Spleen (tissue), 13 donors: ENCODE measurements at regions of chr7 and their contacts with region 1.

Region 1: DNA sequence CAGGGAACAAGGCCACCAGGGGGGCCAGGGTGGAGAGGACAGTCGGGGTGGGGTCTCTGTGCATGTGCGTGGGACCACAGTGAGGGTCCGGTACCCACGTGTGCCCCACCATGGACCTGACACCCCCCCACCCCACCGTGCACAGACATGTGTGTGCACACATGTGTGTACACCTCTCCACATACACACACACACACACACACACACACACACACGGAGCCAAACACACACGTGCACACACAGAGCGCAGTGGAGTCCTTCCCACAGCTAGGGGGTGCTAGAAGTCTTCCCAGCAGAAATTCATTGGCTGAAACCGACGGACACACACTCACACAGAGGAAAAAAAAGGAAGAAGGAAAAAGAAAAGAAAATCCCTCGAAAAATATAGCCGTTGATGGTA is 42.8 kb upstream of the GNA12 start:
- DNase-seq: no peak
- H3K4me3 ChIP-seq: no peak overlapping the region
- H3K27ac ChIP-seq: no peak overlapping the region
- H3K4me1 ChIP-seq: peaks cover 0 to 5% (median 0%) of the 10 kb centered on the region in 6 donors
- H3K27me3 ChIP-seq: no peaks in the 10 kb centered on the region
- CTCF ChIP-seq: peak; percentile 43 to 98 (median 77)
- POLR2A ChIP-seq: no peak

Region 2: DNA sequence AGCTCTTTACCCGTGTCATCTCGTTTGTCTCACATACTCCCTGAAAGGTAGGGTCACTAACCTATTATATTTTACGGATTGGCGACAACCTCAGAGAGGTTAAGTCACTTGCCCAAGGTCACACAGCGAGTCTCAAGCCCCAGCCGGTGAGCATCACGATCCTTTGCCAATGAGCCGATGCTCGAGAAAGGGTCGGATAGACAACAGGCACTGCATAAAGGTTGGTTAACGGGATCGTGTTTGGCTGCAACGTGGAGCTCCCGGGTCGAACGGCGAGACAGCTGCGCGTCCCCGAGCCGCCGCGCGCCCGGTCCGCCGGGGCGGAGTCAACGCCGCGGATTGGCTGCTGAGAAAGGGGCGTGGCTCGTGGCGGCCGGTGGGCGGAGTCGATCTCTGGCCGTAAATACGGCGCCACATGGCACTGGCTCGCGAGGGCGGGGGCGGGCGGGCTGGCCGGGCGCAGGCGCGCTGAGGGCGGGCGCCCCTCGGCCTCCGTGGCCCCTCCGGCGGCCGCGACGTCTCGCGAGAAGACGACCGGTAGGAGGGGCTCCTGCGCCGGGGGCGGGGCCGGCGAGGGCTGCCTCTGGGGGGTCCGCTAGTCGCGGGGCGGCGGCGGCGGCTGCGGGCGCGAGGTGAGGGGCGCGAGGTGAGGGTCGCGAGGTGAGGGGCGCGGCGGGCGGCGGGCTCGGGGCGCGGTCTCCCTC is 483.7 kb before region 1 on chr7 and contains the start of gene CHST12:
- intact Hi-C with region 1: no loop called
- DNase-seq: peak; percentile 97
- H3K4me3 ChIP-seq: peak within 1 kb of the TSS; percentile 76 to 93 (median 88)
- H3K27ac ChIP-seq: peak within 1 kb of the TSS; percentile 63 to 93 (median 84)
- H3K4me1 ChIP-seq: peaks cover 48 to 92% (median 79%) of the 10 kb centered on the region in 6 donors
- H3K27me3 ChIP-seq: no peaks in the 10 kb centered on the region
- CTCF ChIP-seq: peak in 2 of 11 experiments; percentile 4 to 26
- POLR2A ChIP-seq: no peak
- total RNA-seq, gene CHST12: 28.2 to 51.4 (median 33.2) TPM

Region 3: GRCh38 chr7:4479367-4480039 is 1592.6 kb after region 1 on chr7:
- intact Hi-C with region 1: loop called (anchors 10 kb)
- DNase-seq: no peak
- H3K4me3 ChIP-seq: no peak overlapping the region
- H3K27ac ChIP-seq: no peak overlapping the region
- H3K4me1 ChIP-seq: no peaks in the 10 kb centered on the region
- H3K27me3 ChIP-seq: no peaks in the 10 kb centered on the region
- CTCF ChIP-seq: peak in 9 of 11 experiments; percentile 19 to 58 (median 48)
- POLR2A ChIP-seq: no peak